ENCODE measurements at regions of chr4 and their contacts with region 1.

Region 1: DNA sequence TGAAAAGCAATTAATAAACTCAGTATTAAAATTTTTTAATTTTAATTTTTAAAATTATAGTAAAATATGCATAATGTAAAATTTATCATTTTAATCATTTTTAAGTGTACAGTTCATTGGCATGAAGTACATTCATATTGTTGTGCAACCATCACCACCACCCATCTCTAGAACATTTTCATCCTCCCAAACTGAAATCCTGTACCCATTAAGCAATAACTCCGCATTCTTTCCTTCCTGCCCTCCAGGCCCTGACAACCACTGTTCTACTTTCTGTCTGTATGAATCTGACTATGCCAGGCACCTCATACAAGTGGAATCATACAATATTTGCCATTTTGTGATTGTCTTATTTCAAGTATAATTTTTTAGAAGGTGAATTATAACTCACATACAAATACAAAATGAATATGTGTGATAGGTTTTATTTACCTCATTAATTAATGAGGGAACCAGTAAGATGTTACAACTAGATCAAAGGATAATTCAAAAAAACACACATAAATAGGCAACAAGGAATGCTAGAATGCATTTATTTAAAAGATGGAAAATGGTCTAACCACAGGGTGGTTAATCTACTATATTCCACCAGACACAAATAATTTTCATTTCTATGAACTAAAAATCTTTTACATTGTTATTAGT is 13.1 kb upstream of the AFF1 start:
- DNase-seq: peak; percentile 68
- H3K4me3 ChIP-seq: no peak overlapping the region
- H3K27ac ChIP-seq: peak overlapping the region; percentile 92
- H3K4me1 ChIP-seq: peaks cover 55% of the 10 kb centered on the region
- H3K27me3 ChIP-seq: no peaks in the 10 kb centered on the region
- CTCF ChIP-seq: no peak

Region 2: DNA sequence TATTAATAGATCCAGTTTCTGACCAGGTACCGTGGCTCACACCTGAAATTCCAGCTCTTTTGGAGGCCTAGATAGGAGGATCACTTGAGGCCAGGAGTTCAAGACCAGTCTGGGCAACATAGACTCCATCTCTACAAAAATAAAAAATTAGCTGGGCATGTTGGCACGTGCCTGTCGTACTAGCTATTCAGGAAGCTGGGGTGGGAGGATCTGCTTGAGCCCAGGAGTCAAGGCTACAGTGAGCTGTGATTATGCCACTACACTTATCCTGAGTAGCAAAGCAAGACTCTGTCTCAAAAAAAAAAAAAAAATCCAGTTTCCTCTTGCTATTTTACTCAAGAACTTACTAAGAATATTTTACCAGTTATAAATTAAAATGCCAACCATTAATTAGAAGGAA is 164.3 kb before region 1 on chr4:
- CTCF ChIA-PET with region 1: no interaction called
- dilution Hi-C with region 1: no loop called
- in situ Hi-C with region 1: no loop called
- intact Hi-C with region 1: no loop called
- DNase-seq: peak; percentile 47
- H3K4me3 ChIP-seq: no peak overlapping the region
- H3K27ac ChIP-seq: no peak overlapping the region
- H3K4me1 ChIP-seq: no peaks in the 10 kb centered on the region
- H3K27me3 ChIP-seq: no peaks in the 10 kb centered on the region
- CTCF ChIP-seq: no peak

Region 3: DNA sequence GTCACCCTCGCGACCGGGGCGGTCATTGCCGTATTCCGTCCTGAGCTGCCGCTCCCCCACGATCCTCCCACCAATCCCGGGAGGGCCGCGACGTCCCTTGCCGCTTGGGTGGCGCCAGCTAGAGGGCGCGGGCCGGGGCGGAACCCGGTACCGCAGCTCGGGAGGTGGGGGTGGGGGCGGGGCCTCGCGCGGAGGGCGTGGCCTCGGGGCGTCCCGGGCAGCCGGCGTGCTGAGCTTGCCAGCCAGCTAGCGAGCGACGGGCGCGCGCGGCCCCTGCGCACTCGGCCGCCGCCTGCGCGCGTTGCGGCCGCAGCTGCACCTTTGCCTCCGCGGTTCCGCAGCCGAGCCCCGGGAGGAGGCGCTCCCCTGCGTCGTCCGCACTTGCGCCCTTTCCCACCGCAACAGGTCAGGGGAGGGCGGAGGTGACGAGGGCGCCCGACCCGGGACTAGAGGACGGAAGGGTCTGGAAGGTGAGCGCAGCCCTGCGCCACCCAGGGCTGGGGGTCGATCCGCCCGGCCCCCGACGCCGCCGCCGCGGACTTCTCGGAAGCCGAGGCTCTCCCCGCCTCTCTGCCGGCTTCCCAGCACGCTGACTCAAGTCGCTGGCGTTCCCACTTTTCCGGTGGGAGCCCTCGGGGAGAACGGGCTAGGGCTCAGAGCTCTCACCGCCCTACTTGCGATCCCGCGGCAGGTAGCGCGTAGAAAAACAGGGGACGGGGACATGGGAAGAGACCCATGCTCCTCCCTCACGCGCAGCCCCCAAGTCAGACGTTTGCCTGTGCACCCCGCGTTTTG is 13.2 kb after region 1 on chr4 and contains the start of gene AFF1:
- CTCF ChIA-PET with region 1: interaction called, 8 read pairs
- dilution Hi-C with region 1: no loop called
- in situ Hi-C with region 1: no loop called
- intact Hi-C with region 1: loop called (anchors 1 kb)
- DNase-seq: peak; percentile 90
- H3K4me3 ChIP-seq: peak within 1 kb of the TSS; percentile 81 to 99 (median 91)
- H3K27ac ChIP-seq: peak within 1 kb of the TSS; percentile 97
- H3K4me1 ChIP-seq: peaks cover 22% of the 10 kb centered on the region
- H3K27me3 ChIP-seq: no peaks in the 10 kb centered on the region
- CTCF ChIP-seq: peak in 1 of 2 donors; percentile 41
- total RNA-seq, gene AFF1: 24.8 to 48.3 TPM

Region 4: GRCh38 chr4:87150498-87151261 is 228.9 kb after region 1 on chr4:
- CTCF ChIA-PET with region 1: no interaction called
- dilution Hi-C with region 1: no loop called
- in situ Hi-C with region 1: no loop called
- intact Hi-C with region 1: loop called (anchors 1 kb)
- DNase-seq: peak; percentile 64
- H3K4me3 ChIP-seq: no peak overlapping the region
- H3K27ac ChIP-seq: no peak overlapping the region
- H3K4me1 ChIP-seq: no peaks in the 10 kb centered on the region
- H3K27me3 ChIP-seq: no peaks in the 10 kb centered on the region
- CTCF ChIP-seq: peak; percentile 82 to 99

Region 5: DNA sequence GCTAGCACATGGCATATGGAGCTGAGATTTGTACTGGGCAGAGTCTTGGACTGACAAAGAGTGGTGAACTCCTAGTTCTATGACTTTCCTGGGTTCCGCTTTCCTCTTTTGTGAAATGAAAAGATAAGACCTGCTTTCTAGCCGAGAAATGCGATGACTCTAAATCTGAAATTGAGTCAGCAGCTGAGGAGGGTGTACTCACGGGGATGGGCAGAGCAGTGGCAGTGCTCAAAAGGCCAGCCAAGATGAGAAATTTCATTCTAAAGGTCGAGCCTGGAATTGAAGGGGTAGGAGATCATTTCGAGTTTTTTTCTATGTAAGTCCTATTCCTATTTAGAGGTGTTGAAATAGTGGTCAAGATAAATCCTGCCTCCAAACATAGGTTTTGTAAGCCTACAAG is 547.7 kb after region 1 on chr4:
- CTCF ChIA-PET with region 1: no interaction called
- dilution Hi-C with region 1: no loop called
- in situ Hi-C with region 1: no loop called
- intact Hi-C with region 1: no loop called
- DNase-seq: no peak
- H3K4me3 ChIP-seq: no peak overlapping the region
- H3K27ac ChIP-seq: no peak overlapping the region
- H3K4me1 ChIP-seq: no peaks in the 10 kb centered on the region
- H3K27me3 ChIP-seq: no peaks in the 10 kb centered on the region
- CTCF ChIP-seq: no peak

Region 6: GRCh38 chr4:88378691-88379559 is 1457.2 kb after region 1 on chr4 and contains the start of gene HERC6:
- CTCF ChIA-PET with region 1: no interaction called
- dilution Hi-C with region 1: no loop called
- in situ Hi-C with region 1: no loop called
- intact Hi-C with region 1: no loop called
- DNase-seq: peak; percentile 89
- H3K4me3 ChIP-seq: peak within 1 kb of the TSS; percentile 91 to 95 (median 94)
- H3K27ac ChIP-seq: peak within 1 kb of the TSS; percentile 69
- H3K4me1 ChIP-seq: peaks cover 3% of the 10 kb centered on the region
- H3K27me3 ChIP-seq: no peaks in the 10 kb centered on the region
- CTCF ChIP-seq: peak; percentile 45 to 80
- total RNA-seq, gene HERC6: 7.6 to 10.2 TPM